Dorsolateral prefrontal cortex (tissue), 120 donors: ENCODE measurements at regions of chr21 and their contacts with region 1.

Region 1: DNA sequence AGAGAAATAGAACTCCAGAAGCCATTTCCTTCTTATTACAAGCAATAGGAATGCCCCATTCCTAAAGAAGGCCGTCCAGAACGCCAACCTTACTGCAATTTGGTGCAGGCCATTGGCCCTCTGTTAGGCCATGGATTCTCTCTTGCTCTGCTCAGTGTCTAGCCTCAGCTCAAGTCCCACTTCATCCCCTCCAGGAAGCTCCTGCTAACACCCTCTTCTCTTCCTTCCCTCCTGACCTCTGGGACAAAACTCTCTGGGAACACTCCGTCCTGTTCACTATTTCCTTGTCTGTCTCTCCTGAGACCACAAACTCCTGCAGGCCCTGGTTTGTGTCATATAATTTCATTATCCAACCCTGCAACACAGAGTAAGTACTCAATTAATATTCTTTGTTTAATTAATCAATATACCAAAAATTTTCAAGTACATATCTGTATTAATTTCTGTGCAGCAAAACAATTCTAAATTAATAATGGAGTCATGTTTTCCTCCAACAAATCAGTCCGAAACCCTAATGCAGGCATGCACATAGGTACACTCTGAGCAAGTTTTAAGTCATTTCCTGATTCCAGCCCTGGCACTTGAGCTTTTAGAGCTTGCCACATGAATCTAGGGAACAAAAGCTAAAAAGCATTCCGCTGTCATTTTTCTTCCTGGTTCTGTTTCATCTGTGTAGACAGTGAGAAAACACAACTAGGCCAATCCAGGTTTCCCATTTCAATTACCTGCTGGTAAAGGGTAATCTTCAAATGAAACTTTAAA is 245.3 kb downstream of the SETD4 start:
- DNase-seq: no peak
- H3K4me3 ChIP-seq: no peak overlapping the region
- H3K27ac ChIP-seq: no peak overlapping the region
- H3K27me3 ChIP-seq: no peaks in the 10 kb centered on the region
- CTCF ChIP-seq: no peak

Region 2: DNA sequence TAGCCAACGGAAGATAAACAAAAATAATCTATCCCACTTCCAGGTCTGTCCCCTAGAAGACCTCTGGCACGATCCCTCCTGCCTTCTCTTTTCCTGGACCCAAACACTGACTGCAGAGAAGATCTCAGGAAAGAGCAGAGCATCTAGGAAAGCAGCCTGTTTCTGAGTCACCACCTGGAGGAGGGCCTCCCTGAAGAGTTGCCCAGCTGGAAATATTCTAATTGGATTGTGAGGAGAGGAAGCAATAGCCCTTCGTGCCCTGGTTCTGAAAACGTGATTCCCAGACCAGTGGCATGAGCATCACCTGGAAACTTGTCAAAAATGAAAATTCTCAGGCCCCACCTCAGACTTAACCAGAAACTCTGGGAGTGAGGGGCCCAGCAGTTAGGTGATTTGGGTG is 165.9 kb before region 1 on chr21:
- intact Hi-C with region 1: loop called in 1 of 2 experiments (anchors 10 kb)
- DNase-seq: no peak
- H3K4me3 ChIP-seq: no peak overlapping the region
- H3K27ac ChIP-seq: no peak overlapping the region
- H3K27me3 ChIP-seq: peaks cover 0 to 29% (median 0%) of the 10 kb centered on the region in 45 donors
- CTCF ChIP-seq: no peak

Region 3: DNA sequence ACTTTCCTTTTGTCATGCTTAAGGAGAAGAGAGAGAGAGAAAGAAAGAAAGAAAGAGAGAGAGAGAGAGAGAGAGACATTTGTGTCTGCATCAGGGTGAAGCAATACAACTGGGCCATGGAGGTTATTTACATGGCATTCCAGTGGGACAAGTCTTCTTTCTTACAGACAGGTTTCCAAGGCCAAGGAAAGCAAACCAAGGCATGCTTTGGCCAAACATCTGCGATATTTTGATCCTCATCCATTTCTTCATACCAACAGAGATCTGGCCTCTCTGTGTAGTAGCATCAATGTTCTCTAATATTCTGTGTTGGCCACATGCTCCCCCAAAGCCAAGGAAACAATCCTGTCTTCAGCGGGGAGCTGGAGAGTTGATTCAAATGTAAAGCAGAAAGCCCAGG is 46.9 kb before region 1 on chr21:
- intact Hi-C with region 1: no loop called
- DNase-seq: no peak
- H3K4me3 ChIP-seq: no peak overlapping the region
- H3K27ac ChIP-seq: no peak overlapping the region
- H3K27me3 ChIP-seq: peaks cover 0 to 3% (median 0%) of the 10 kb centered on the region in 45 donors
- CTCF ChIP-seq: no peak